Activated CD8-positive, alpha-beta memory T cell treated with anti-CD3 and anti-CD28 coated beads, Interleukin-2, amount 10 ng/mL, durations not matched to agents 7 days and 5 days (primary cell): ENCODE measurements at regions of chr1 and their contacts with region 1.

Region 1: DNA sequence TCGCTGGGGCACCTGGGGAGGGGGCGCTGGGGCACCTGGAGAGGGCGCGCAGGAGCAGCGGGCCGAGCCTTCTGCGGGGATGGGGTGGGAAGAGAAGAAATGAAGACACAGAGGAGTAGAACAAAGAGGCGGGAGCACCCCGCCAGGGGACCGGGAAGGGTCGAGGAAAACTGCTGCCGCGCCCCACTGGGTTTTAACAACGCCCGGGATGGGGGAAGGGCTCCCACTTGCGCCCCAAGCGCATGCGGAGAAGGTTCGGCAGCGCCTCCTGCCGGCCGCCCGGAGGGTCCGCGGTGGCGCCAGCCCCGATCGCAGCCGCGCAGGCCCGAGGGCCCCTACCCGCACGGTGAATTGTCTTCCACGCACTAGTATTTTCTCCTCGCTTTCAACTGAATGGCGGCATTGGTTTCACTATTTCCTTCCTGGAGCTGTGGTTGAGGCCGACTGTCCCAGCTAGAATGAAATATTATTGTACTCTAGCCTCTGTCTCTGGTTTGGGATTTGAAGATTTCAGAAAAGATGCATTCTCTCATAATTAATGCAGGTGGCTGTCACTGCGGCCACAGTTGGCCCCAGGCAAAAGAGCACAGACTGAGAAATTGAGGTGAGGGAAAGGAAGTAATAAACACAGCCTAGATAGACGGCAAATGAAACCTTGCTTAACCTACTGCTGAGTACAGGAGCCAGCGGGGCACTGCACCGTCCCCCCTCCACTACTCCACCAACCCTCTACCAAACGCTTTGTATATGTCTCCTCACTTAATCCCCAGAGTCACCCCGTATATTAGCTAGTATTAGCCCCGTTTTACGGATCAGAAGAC is 57.3 kb downstream of the MAB21L3 start:
- DNase-seq: peak; percentile 83
- ATAC-seq: peak; percentile 98
- H3K4me3 Mint-ChIP-seq: peak overlapping the region; percentile 61
- H3K27ac Mint-ChIP-seq: peak overlapping the region; percentile 39
- H3K4me1 Mint-ChIP-seq: peaks cover 6% of the 10 kb centered on the region
- H3K27me3 Mint-ChIP-seq: no peaks in the 10 kb centered on the region

Region 2: DNA sequence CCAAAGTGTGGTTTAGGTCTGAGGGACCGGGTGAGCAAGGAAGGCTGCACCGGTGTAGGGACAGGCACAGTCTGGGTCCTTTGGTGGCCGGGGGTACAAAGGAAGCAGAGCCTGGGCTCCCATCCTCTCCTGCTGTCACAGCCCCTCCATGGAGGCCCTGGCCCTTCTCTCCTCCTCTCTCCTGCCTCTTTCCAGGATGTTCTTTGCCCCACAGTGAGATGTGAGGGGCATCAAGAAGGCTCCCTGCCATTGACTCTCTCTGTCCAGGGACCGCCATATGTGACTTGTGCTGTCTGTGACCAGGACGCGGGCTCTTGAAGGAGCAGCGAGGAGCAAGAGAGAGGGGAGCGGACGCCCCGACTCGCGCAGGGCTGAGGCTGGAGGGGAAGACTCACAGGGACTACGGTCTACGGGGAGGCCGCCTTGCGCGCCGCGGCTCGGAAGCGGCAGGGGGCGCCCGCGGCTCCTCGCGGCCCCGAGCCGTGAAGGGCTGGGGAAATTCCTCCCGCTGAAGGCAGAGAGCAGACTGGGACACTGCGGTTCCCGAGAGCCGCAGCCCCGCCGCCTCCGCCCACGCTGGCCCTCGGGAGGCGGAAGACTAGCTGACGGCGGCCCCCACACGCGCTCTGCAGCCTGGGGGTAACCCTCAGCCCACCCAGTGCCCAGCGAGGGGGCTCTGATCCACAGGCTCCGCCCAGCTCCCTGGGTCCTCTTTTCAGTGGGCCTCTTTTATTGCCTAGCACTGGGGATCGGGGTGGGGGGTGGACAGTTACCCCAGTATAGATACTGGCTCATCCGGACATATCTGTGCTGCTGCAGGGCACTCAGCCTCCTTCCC is 16.5 kb before region 1 on chr1:
- CTCF ChIA-PET with region 1: interaction called, 22 read pairs
- DNase-seq: peak; percentile 78
- ATAC-seq: peak; percentile 98
- H3K4me3 Mint-ChIP-seq: peak overlapping the region; percentile 32
- H3K27ac Mint-ChIP-seq: no peak overlapping the region
- H3K4me1 Mint-ChIP-seq: peaks cover 7% of the 10 kb centered on the region
- H3K27me3 Mint-ChIP-seq: peaks cover 14% of the 10 kb centered on the region